ENCODE measurements at regions of chr21 and their contacts with region 1.

Region 1: DNA sequence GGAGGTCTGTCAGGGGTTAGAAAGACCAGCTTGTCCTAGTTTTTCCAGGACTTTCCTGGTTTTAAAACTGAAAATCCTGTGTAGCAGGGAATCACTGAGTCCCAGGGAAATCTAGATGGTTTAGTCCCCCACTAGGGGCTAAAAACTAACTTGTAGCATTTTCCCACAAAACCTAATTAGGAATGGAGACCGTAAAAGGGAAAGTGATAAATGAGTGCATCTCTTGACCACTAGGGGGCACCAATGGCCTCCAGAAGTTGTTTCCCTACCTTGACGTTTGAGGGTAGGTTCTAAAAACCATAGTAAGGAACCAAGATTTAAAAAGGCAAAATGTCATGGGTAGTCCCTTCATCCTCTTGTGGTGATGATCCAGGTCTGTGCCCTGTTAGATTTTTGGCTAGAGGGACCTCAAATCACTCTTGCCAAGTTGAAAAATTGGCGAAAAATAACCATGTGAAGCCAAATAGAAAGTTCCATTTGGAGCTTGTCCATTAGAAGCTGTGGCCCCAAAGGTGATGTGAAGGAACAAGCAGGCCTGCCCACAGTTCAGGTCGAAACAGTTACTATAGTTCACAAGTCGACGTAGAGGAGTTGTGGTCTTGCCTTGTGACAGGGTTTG is 24.5 kb downstream of the CLIC6 start:
- DNase-seq: peak; percentile 68
- ATAC-seq: peak; percentile 39
- H3K4me3 Mint-ChIP-seq: no peak overlapping the region
- H3K27ac Mint-ChIP-seq: no peak overlapping the region
- H3K4me1 Mint-ChIP-seq: peaks cover 6% of the 10 kb centered on the region
- H3K27me3 Mint-ChIP-seq: peaks cover 7% of the 10 kb centered on the region
- CTCF ChIP-seq: peak; percentile 87

Region 2: DNA sequence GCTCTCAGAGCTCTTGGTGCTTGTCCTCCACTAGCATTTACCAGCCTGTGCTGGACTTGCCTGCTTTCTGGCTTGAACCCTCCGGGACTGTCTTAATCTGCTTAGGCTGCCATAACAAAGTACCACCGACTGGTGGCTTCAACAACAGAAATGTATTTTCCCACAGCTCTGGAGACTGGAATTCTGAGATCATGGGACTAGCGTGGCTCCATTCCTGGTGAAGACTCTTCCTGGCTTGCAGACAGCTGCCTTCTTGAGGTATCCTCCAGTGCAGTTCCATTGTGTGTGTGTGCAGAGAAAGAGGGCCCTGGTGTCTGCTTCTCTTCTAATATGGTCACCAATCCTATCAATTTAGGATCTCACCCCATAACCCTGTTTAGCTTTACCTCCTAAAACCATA is 56.3 kb before region 1 on chr21:
- CTCF ChIA-PET with region 1: no interaction called
- POLR2A ChIA-PET with region 1: no interaction called
- intact Hi-C with region 1: no loop called
- DNase-seq: no peak
- ATAC-seq: no peak
- H3K4me3 Mint-ChIP-seq: no peak overlapping the region
- H3K27ac Mint-ChIP-seq: no peak overlapping the region
- H3K4me1 Mint-ChIP-seq: peaks cover 17% of the 10 kb centered on the region
- H3K27me3 Mint-ChIP-seq: no peaks in the 10 kb centered on the region
- CTCF ChIP-seq: no peak

Region 3: DNA sequence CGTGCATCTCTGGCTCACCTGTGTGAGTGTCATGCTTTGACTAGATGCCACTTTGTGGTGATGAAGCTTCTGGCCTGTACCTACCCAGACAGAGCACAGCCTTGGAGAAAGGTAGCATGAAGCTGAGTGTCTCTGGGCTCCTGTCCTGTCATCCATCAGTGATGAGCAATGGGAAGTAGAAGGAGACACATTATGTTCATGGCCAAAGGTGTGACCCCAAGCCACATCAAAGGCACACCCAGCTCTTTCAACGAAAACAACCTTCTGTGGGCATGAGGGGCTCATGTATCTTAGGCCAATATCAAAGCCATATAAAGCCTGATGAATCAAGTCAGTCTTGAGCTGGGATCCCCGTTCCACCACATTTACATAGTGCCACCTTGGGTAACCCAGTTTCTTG is 25.5 kb before region 1 on chr21:
- CTCF ChIA-PET with region 1: interaction called, 13 read pairs
- POLR2A ChIA-PET with region 1: no interaction called
- intact Hi-C with region 1: no loop called
- DNase-seq: peak; percentile 35
- ATAC-seq: no peak
- H3K4me3 Mint-ChIP-seq: no peak overlapping the region
- H3K27ac Mint-ChIP-seq: no peak overlapping the region
- H3K4me1 Mint-ChIP-seq: peaks cover 9% of the 10 kb centered on the region
- H3K27me3 Mint-ChIP-seq: peaks cover 47% of the 10 kb centered on the region
- CTCF ChIP-seq: no peak

Region 4: DNA sequence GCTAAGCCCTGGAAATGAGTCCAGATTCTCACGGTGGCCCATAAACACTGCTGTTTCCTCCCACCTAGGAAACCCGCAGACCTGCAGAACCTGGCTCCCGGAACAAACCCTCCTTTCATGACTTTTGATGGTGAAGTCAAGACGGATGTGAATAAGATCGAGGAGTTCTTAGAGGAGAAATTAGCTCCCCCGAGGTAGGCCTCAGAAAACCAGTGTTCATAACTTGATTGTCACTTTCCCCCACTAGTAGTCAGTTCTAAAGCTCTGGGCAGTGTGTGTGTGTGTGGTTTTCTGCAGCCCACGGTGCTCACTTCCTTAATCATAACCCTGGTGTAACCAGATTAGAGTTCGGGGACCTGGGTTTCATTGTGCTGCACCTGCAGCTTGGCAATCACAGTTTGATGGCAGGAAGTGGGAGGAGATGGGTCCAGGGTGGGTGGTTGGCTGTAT is 14.6 kb after region 1 on chr21:
- CTCF ChIA-PET with region 1: interaction called, 25 read pairs
- POLR2A ChIA-PET with region 1: interaction called, 3 read pairs
- intact Hi-C with region 1: no loop called
- DNase-seq: peak; percentile 85
- ATAC-seq: peak; percentile 98
- H3K4me3 Mint-ChIP-seq: no peak overlapping the region
- H3K27ac Mint-ChIP-seq: peak overlapping the region; percentile 63
- H3K4me1 Mint-ChIP-seq: peaks cover 26% of the 10 kb centered on the region
- H3K27me3 Mint-ChIP-seq: peaks cover 5% of the 10 kb centered on the region
- CTCF ChIP-seq: no peak

Region 5: GRCh38 chr21:34722684-34723300 is 29.5 kb after region 1 on chr21:
- CTCF ChIA-PET with region 1: interaction called, 24 read pairs
- POLR2A ChIA-PET with region 1: no interaction called
- intact Hi-C with region 1: no loop called
- DNase-seq: peak; percentile 53
- ATAC-seq: peak; percentile 39
- H3K4me3 Mint-ChIP-seq: no peak overlapping the region
- H3K27ac Mint-ChIP-seq: no peak overlapping the region
- H3K4me1 Mint-ChIP-seq: peaks cover 2% of the 10 kb centered on the region
- H3K27me3 Mint-ChIP-seq: peaks cover 6% of the 10 kb centered on the region
- CTCF ChIP-seq: peak; percentile 93

Region 6: DNA sequence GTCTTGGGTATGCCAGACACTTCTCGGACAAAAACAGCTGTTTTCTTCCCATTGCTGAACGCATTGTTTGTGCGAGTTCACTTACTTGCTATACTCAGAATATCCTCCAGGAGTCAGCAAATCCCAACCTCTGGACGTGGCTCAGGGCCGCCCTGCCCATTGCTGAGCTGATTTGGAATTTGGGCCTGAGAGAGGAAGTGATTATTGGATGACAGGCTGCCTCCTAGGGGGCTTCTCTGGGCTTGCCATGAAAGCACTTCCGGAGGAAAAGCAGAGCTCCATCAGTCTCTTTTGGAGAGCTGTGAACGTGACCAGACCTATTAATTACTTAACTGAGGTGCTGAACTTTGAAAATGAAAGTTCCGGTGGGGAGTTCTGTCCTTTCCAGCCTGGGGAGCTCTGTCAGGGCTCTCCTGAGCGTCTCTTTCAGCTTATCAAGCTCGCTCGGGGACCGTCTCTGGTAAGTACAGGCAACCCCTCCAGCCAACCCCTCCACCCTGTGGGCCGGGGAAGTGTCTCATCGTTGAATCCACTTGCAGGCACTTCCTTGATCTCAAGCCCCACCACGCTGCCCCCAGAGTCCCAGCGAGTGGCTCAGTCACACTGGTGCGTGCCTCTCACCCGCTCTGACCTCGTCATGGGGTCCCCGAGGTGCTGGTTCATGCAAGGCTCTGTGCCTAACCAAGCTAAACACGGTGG is 52.4 kb after region 1 on chr21:
- CTCF ChIA-PET with region 1: interaction called, 20 read pairs
- POLR2A ChIA-PET with region 1: no interaction called
- intact Hi-C with region 1: no loop called
- DNase-seq: peak; percentile 69
- ATAC-seq: peak; percentile 95
- H3K4me3 Mint-ChIP-seq: peak overlapping the region; percentile 44
- H3K27ac Mint-ChIP-seq: peak overlapping the region; percentile 30
- H3K4me1 Mint-ChIP-seq: peaks cover 3% of the 10 kb centered on the region
- H3K27me3 Mint-ChIP-seq: peaks cover 11% of the 10 kb centered on the region
- CTCF ChIP-seq: peak; percentile 91

Region 7: GRCh38 chr21:35400233-35400957 is 707.1 kb after region 1 on chr21:
- CTCF ChIA-PET with region 1: interaction called, 13 read pairs
- POLR2A ChIA-PET with region 1: no interaction called
- intact Hi-C with region 1: no loop called
- DNase-seq: peak; percentile 43
- ATAC-seq: peak; percentile 93
- H3K4me3 Mint-ChIP-seq: no peak overlapping the region
- H3K27ac Mint-ChIP-seq: no peak overlapping the region
- H3K4me1 Mint-ChIP-seq: peaks cover 15% of the 10 kb centered on the region
- H3K27me3 Mint-ChIP-seq: peaks cover 1% of the 10 kb centered on the region
- CTCF ChIP-seq: peak; percentile 73

Region 8: GRCh38 chr21:35840197-35840799 is 1147.0 kb after region 1 on chr21:
- CTCF ChIA-PET with region 1: interaction called, 19 read pairs
- POLR2A ChIA-PET with region 1: no interaction called
- intact Hi-C with region 1: no loop called
- DNase-seq: peak; percentile 77
- ATAC-seq: no peak
- H3K4me3 Mint-ChIP-seq: no peak overlapping the region
- H3K27ac Mint-ChIP-seq: no peak overlapping the region
- H3K4me1 Mint-ChIP-seq: no peaks in the 10 kb centered on the region
- H3K27me3 Mint-ChIP-seq: no peaks in the 10 kb centered on the region
- CTCF ChIP-seq: peak; percentile 91